Activated B cell treated with CpG ODN at 0.5 μM for 24 hours (primary cell): ENCODE measurements at regions of chr1 and their contacts with region 1.

Region 1: GRCh38 chr1:2314803-2315673 is 76.3 kb downstream of the MORN1 start:
- DNase-seq: peak; percentile 78
- ATAC-seq: peak; percentile 58
- H3K4me3 Mint-ChIP-seq: peak overlapping the region; percentile 66
- H3K27ac Mint-ChIP-seq: peak overlapping the region; percentile 18
- H3K4me1 Mint-ChIP-seq: peaks cover 37% of the 10 kb centered on the region
- H3K27me3 Mint-ChIP-seq: no peaks in the 10 kb centered on the region
- CTCF ChIP-seq: peak; percentile 83

Region 2: GRCh38 chr1:1974834-1975233 is 340.2 kb before region 1 on chr1:
- CTCF ChIA-PET with region 1: no interaction called
- POLR2A ChIA-PET with region 1: no interaction called
- intact Hi-C with region 1: no loop called
- DNase-seq: no peak
- ATAC-seq: no peak
- H3K4me3 Mint-ChIP-seq: no peak overlapping the region
- H3K27ac Mint-ChIP-seq: no peak overlapping the region
- H3K4me1 Mint-ChIP-seq: no peaks in the 10 kb centered on the region
- H3K27me3 Mint-ChIP-seq: peaks cover 9% of the 10 kb centered on the region
- CTCF ChIP-seq: no peak

Region 3: DNA sequence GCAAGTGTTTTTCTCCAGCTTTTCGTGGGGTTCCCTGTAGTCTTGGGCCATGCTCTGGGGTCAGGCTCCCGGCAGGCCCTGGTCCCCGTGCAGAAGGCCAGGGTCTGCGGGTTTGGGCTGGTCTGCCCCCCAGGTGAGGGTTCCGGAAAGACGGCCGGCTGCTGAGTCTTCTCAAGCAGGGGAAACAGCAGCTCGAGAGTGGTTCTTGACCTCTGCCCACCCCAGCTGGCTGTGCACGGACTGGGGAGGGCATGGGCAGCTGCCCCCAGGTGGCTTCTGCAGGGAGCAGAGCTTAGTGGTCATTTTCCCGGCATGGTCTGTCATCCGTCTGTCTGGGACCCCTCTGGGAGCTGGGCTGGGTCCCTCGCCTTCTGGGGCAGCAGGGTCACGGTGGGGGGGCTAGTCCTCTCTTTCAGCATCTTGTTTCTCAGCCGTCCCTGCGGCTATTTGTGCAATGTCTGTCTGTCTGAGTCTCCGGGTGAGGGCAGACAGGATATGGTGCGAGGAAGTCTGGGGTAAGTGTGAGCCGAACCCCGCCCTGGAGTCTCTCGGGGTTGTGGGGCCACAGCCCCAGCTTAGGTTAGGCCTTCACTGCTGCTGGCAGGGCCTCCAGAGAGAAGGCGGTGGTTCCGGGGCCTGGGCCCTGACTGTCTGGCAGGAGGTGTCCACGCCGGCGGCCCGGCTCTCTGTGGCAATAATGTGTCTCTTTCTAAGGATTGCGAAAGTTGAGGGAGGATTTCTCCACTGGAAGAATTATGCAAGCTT is 80.9 kb before region 1 on chr1:
- CTCF ChIA-PET with region 1: interaction called, 4 read pairs
- POLR2A ChIA-PET with region 1: interaction called, 18 read pairs
- intact Hi-C with region 1: loop called (anchors 2 kb)
- DNase-seq: no peak
- ATAC-seq: peak; percentile 81
- H3K4me3 Mint-ChIP-seq: peak overlapping the region; percentile 76
- H3K27ac Mint-ChIP-seq: peak overlapping the region; percentile 91
- H3K4me1 Mint-ChIP-seq: peaks cover 87% of the 10 kb centered on the region
- H3K27me3 Mint-ChIP-seq: no peaks in the 10 kb centered on the region
- CTCF ChIP-seq: no peak

Region 4: DNA sequence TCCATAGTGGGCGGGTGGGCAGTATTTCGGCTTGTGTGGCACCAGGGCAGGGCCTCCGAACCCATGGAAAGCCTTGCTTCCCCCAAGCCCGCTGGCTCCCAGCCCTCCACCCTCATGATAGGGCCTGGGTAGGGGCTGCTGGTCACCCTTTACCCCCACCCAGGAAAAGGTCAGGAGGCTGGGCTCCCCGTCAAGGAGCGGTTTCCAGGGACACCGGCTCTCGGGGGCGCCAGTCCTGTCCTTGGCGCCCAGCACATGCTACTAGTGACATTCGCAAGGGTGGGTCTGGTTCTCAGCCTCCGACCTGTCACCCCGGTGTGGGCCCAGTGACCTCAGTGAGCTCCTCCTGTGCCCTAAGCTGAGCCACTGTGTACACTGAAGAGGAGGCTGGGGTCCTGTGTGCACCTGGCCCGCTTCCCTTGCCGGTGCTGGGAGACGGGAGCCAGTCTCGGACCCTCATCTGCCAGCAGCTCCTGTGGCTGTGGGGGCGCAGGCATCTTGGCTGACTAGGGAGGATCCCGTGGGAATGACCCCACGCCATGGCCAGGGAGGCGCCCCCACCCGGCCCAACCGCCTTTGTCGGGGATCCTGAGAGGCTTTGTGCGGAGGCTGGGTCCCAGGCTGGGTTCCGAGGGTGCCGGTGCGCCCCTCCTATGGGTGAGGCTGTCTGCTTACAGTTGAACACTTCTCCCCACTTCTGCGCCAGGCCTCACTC is 32.3 kb before region 1 on chr1:
- CTCF ChIA-PET with region 1: no interaction called
- POLR2A ChIA-PET with region 1: no interaction called
- intact Hi-C with region 1: no loop called
- DNase-seq: no peak
- ATAC-seq: no peak
- H3K4me3 Mint-ChIP-seq: no peak overlapping the region
- H3K27ac Mint-ChIP-seq: no peak overlapping the region
- H3K4me1 Mint-ChIP-seq: peaks cover 23% of the 10 kb centered on the region
- H3K27me3 Mint-ChIP-seq: no peaks in the 10 kb centered on the region
- CTCF ChIP-seq: no peak